ENCODE measurements at regions of chr18 and their contacts with region 1.

Region 1: DNA sequence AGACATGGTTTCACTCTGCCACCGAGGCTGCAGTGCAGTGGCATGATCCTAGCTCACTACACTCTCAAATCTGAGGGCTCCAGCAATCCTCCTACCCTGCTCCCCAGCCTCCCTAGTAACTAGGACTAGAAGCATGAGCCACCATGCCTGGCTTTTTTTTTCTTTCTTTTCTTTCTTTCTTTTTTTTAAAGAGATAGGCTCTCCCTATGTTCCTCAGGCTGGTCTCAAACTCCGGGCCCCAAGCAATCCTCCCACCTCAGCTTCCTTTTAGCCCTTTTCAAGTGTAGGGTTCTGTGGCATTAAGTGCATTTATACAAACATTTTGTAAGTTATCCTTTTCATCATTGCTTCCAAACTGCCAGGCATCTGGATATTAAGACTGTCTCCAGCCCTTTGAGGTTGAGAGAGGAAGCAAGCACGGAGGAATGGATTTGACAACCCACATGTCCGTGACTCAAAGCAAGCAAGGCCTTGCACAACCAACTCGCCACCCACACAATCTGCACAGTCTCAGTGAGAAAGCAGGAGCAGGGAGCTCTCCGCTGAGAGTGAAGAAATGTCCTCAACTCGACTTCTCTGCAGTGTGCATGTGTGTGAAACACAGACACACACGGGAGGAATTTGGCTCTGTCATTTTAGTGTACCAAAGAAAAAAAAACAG is 65.6 kb downstream of the ATP8B1 start:
- DNase-seq: peak; percentile 83
- ATAC-seq: peak; percentile 98
- H3K4me3 ChIP-seq: peak overlapping the region in 1 of 3 experiments; percentile 24; a peak in 1 of 6 replicates
- H3K27ac ChIP-seq: peak overlapping the region; percentile 45
- H3K4me1 ChIP-seq: peaks cover 26% of the 10 kb centered on the region
- H3K27me3 ChIP-seq: no peaks in the 10 kb centered on the region; a peak in 1 of 5 replicates
- CTCF ChIP-seq: no peak
- EP300 ChIP-seq: peak in 1 of 2 experiments; percentile 60; a peak in 1 of 4 replicates
- POLR2A ChIP-seq: no peak
- RAD21 ChIP-seq: no peak

Region 2: DNA sequence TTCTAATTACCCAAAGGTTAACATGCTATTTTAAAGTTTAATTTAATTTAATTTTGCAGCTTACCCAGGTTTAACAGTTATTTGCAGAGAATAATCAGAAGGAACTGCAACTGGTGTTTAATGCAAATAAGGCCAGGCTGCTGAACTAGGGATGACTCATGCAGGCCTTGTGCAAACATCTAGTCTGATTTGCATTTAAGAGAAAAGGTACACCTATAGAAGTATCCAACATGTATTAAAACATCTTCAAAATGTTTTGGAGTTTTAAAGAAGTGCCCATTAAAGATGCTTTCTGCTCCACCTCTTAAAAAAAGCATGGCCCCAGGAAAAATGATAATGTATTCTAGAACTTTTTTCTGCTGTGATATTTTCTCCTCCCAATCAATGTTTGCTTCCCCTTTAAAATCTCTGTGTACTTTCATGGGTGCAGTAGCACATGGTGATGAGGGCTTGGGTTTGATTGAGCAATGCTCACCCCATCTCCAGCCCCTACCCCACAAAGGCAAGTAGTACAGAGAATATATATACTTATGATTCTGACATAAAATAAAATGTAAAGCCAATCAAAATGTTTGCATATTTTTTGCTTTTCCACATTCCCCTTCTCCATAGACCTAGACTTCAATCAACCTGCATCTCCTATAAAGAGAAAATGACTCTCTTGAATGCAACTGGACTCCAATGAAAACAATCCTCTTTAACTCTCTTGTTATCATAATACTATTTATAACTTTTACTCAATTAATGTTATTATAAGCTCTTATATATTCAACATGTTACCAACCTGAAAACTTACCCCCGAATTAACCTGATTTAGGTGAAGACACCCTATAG is 11.5 kb after region 1 on chr18:
- CTCF ChIA-PET with region 1: no interaction called
- POLR2A ChIA-PET with region 1: interaction called, 13 read pairs
- in situ Hi-C with region 1: no loop called
- intact Hi-C with region 1: no loop called
- DNase-seq: peak; percentile 76
- ATAC-seq: peak; percentile 93
- H3K4me3 ChIP-seq: peak overlapping the region in 1 of 3 experiments; percentile 9; a peak in 1 of 6 replicates
- H3K27ac ChIP-seq: peak overlapping the region; percentile 24
- H3K4me1 ChIP-seq: peaks cover 52% of the 10 kb centered on the region
- H3K27me3 ChIP-seq: no peaks in the 10 kb centered on the region
- CTCF ChIP-seq: no peak
- EP300 ChIP-seq: no peak
- POLR2A ChIP-seq: no peak
- RAD21 ChIP-seq: no peak

Region 3: DNA sequence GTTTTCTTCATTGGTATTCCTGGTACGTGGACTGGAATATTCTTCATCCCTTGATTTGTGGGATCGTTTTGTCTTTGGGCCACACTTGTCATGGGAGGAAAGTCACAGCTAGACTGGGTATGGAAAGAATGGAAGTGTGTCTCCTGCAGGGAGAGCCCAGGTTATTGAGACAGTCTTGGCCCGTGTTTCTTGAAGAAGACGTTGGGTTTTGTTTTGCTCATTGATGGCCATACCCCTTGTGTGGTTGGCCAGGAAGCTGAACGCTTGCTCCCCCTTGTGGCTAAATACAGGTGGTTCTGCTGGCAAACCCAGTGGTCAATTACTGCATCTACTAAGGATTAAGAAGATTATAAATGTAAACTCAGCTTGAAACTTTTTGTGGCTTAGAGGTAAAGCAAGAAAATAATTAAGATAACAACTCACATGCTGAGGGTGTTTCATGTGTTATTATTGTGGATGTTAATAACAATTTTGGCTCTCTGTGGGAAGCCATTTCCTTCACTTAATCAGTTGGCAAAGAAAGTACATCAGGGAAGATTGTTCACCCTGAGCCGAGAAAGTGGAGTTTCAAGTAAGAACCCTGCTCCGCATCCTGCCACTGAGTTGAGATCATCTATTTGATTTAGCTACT is 398.3 kb after region 1 on chr18:
- CTCF ChIA-PET with region 1: no interaction called
- POLR2A ChIA-PET with region 1: no interaction called
- in situ Hi-C with region 1: no loop called
- intact Hi-C with region 1: no loop called
- DNase-seq: peak; percentile 31
- ATAC-seq: peak; percentile 51
- H3K4me3 ChIP-seq: no peak overlapping the region
- H3K27ac ChIP-seq: no peak overlapping the region
- H3K4me1 ChIP-seq: peaks cover 78% of the 10 kb centered on the region
- H3K27me3 ChIP-seq: no peaks in the 10 kb centered on the region
- CTCF ChIP-seq: peak; percentile 56
- EP300 ChIP-seq: no peak
- POLR2A ChIP-seq: no peak
- RAD21 ChIP-seq: no peak

Measured in HepG2 (cell line).